Activated CD8-positive, alpha-beta T cell treated with anti-CD3 and anti-CD28 coated beads for 36 hours (primary cell): ENCODE measurements at regions of chr16 and their contacts with region 1.

Region 1: GRCh38 chr16:66872943-66873684 is 7.2 kb upstream of the PDP2 start:
- DNase-seq: peak; percentile 97
- ATAC-seq: peak; percentile 84
- H3K4me3 Mint-ChIP-seq: peak overlapping the region; percentile 83
- H3K27ac Mint-ChIP-seq: peak overlapping the region; percentile 93
- H3K4me1 Mint-ChIP-seq: peaks cover 48% of the 10 kb centered on the region
- H3K27me3 Mint-ChIP-seq: no peaks in the 10 kb centered on the region
- CTCF ChIP-seq: peak; percentile 94

Region 2: GRCh38 chr16:66740010-66740409 is 133.1 kb before region 1 on chr16:
- CTCF ChIA-PET with region 1: interaction called, 12 read pairs
- POLR2A ChIA-PET with region 1: interaction called, 3 read pairs
- intact Hi-C with region 1: no loop called
- DNase-seq: peak; percentile 61
- ATAC-seq: peak; percentile 76
- H3K4me3 Mint-ChIP-seq: no peak overlapping the region
- H3K27ac Mint-ChIP-seq: peak overlapping the region; percentile 8
- H3K4me1 Mint-ChIP-seq: peaks cover 16% of the 10 kb centered on the region
- H3K27me3 Mint-ChIP-seq: no peaks in the 10 kb centered on the region
- CTCF ChIP-seq: peak; percentile 66

Region 3: DNA sequence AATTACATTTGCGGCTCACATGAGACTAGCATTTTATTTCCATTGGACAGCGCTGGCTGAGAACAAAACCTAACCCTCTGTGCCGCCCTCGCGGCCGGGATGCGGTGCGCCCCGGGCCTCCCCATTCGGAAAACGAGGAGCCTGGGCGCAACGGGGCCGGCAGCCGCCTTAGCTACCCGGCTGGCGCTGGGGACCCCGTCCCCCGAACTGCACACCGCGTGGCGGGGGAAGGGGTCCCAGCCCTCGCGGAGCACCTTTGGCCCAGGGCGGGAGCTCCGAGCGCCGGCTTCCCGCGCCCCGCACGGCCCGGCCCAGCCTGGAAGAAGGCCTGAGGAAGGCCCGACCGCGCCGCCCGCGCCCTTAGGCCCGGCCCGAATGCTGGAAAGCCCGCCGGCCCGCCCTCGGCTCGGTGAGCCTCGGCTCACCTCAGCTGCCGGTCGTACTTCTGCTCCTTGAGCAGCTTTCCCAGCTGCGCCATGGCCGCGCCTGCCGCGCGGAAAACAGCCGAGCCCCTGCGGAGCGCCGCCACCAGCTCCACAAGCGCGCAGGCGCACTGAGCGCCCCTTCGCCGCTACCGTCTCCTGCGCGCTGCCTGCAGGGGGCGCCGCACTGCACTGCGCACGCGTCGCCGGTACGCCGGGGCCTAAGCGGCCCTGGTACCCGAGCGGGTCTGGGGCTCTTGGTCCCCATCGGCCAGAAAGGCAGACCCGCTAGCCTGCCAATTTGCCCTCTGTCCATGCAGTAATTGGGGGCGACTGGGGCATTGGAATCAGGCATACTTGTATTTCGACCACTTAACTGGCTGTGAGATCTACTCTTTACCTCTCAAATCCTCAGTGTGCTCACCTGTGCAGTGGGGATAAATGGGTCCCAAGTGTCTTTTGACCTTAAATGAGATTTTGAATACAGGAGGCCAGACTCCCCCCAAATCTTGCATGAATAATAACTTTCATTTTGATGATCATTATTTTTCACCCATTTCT is 42.4 kb before region 1 on chr16 and contains the start of gene NAE1:
- CTCF ChIA-PET with region 1: interaction called, 214 read pairs
- POLR2A ChIA-PET with region 1: interaction called, 14 read pairs
- intact Hi-C with region 1: loop called (anchors 5 kb)
- DNase-seq: peak; percentile 88
- ATAC-seq: peak; percentile 98
- H3K4me3 Mint-ChIP-seq: peak within 1 kb of the TSS; percentile 73
- H3K27ac Mint-ChIP-seq: peak within 1 kb of the TSS; percentile 78
- H3K4me1 Mint-ChIP-seq: peaks cover 32% of the 10 kb centered on the region
- H3K27me3 Mint-ChIP-seq: no peaks in the 10 kb centered on the region
- CTCF ChIP-seq: peak; percentile 98
- total RNA-seq, gene NAE1: 115 to 123 TPM

Region 4: DNA sequence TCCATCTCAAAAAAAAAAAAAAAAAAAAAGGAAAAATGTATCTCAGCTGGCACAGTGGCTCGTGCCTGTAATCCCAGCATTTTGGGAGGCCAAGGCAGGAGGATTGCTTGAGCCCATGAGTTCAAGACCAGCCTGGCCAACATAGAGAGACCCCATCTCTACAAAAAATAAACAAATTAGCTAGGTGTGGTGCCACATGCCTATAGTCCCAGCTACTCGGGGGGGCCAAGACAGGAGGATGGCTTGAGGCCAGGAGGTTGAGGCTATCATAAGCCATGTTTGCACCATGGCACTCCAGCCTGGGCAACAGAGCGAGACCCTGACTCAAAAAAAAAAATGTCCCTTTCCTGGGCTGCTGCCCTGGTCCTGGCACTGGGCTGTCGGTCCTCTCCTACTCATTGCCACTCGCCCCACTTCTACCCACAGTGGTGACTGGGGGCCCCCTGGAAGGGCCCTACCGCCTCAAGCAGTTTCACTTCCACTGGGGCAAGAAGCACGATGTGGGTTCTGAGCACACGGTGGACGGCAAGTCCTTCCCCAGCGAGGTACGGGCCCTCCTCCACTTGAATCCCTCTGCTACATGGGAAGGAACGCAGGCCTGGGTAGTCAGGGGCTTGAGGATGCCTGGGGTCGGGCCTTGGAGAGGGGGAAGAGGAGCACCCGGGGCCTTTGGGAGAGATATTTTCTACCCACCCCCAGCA is 22.8 kb before region 1 on chr16:
- CTCF ChIA-PET with region 1: interaction called, 41 read pairs
- POLR2A ChIA-PET with region 1: no interaction called
- intact Hi-C with region 1: no loop called
- DNase-seq: no peak
- ATAC-seq: no peak
- H3K4me3 Mint-ChIP-seq: no peak overlapping the region
- H3K27ac Mint-ChIP-seq: no peak overlapping the region
- H3K4me1 Mint-ChIP-seq: peaks cover 10% of the 10 kb centered on the region
- H3K27me3 Mint-ChIP-seq: peaks cover 15% of the 10 kb centered on the region
- CTCF ChIP-seq: no peak

Region 5: DNA sequence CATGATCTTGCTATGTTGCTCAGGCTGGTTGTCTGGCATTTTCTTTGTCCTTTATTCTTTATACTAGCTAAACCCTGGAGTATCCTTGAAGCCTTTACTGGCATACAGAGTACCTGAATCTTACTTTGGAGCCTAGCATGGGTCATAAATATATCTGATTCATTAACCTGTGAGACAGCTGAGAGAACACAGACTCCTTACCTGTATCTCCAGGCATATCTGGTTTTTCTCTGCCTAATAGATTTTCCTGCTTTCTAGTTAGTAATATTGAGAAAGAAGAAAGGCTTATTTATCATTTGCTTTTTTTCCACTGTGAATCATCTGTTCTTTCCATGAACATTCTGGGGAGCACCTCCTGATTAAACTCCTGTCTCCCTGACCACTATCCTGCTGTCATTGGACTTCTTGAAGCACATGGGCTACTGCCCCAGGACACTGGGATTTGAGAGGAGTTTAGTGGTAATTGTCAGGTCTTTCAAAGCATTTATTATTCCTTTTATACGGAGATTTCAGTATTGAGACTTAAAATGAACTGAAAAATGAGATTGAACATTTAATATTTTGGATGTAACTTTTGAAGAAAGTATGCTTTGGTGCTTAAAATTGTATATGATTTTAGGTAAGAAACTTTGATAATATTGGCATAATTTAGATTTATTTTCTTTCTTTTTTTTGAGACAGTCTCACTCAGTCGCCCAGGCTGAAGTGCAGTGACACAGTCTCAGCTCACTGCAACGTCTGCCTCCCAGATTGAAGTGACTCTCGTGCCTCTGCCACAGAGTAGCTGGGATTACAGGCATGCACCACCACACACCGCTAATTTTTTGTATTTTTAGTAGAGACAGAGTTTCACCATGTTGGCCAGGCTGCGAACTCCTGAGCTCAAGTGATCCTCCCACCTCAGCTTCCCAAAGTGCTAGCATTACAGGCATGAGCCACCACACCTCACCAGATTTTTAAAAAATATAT is 15.8 kb after region 1 on chr16:
- CTCF ChIA-PET with region 1: interaction called, 11 read pairs
- POLR2A ChIA-PET with region 1: interaction called, 5 read pairs
- intact Hi-C with region 1: no loop called
- DNase-seq: no peak
- ATAC-seq: no peak
- H3K4me3 Mint-ChIP-seq: no peak overlapping the region
- H3K27ac Mint-ChIP-seq: peak overlapping the region; percentile 66
- H3K4me1 Mint-ChIP-seq: peaks cover 39% of the 10 kb centered on the region
- H3K27me3 Mint-ChIP-seq: no peaks in the 10 kb centered on the region
- CTCF ChIP-seq: no peak